AG04450 (cell line): ENCODE measurements at regions of chr10 and their contacts with region 1.

Region 1: GRCh38 chr10:124911124-124912067 is 30.5 kb upstream of the ZRANB1 start:
- DNase-seq: no peak
- H3K4me3 ChIP-seq: no peak overlapping the region
- H3K27ac ChIP-seq: peak overlapping the region; percentile 58
- H3K27me3 ChIP-seq: no peaks in the 10 kb centered on the region
- CTCF ChIP-seq: no peak; the same call in 1 of the 2 replicates

Region 2: DNA sequence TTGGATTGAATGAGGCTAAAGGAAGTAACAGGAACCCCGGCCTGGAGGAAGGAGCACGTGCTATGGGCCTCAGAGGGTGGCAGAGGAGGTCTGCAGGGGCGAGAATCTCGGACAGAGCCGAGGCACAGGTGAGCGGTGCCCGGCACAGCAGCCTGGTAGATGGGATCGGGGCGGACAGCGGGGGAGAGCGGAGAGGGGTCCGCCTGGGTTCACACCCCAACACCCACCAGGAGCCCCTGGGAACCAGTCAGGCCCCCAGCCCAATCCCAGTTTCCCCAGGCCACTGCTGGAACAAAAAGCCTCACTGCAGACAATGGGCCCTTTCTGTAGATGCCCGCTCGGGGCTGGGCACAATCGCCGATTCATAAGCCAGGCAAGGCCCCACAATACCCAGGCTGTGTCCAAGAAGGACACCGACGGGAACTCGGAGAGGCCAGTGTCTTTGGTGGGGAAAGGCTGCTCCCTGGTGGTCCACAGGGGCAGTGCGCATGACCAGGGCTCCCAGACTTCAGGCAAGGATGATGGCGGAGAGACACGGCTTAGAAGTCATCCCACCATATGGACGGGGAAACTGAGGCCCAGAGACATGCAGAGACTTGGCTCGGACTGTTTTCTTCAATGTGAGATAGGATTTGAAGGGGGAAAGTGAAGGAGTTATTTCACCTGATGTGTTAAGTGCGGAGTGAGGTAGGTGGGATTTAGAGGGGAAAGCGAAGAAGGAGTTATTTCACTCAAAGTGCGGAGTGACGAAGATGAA is 1352.2 kb before region 1 on chr10:
- CTCF ChIA-PET with region 1: no interaction called
- POLR2A ChIA-PET with region 1: no interaction called
- DNase-seq: no peak
- H3K4me3 ChIP-seq: no peak overlapping the region
- H3K27ac ChIP-seq: no peak overlapping the region
- H3K27me3 ChIP-seq: no peaks in the 10 kb centered on the region
- CTCF ChIP-seq: peak; percentile 88

Region 3: DNA sequence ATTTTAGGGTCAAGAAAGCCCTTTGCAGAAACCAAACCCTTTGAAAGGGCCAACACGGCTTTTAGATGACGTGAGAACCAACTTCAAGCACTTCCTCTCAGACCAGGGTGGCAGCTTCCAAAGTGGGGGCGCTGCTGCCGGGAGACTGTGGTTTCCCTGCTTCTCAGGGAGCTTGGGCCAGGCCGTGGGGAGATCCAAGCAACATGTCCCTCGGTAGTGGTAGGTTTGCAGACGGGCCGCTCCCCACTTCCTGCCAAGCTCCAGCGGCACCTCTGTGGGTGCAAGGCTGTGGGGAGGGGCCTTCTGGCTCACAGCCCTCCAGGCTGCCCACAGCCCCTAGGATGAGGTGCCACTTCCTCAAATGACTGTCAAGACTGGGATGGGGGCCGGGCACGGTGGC is 299.7 kb before region 1 on chr10:
- CTCF ChIA-PET with region 1: interaction called, 12 read pairs
- POLR2A ChIA-PET with region 1: no interaction called
- DNase-seq: no peak
- H3K4me3 ChIP-seq: no peak overlapping the region
- H3K27ac ChIP-seq: no peak overlapping the region
- H3K27me3 ChIP-seq: no peaks in the 10 kb centered on the region
- CTCF ChIP-seq: no peak

Region 4: DNA sequence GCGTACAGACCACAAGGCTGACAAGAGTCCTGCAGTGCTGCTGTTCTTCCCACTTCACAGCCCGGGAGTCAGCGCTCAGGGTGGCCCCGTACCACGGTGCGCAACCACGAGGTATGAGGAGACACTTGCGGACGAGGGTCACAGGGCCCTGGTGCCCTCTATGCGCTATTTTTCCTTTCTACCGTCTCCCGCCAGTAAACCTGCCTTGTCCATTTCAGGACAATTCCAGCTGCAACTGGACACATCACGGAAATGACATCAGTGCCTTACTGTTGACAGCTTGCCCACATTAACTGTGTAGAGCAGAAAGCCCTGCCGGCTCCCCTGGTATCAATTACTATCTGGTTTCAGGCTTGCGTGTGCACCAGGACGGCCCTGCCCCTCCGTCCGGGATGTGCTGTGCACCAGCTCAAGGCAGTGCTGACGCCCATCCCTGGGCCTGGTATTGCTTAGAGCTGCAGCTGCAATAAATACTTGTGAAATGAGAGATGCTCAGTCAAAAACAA is 95.6 kb after region 1 on chr10:
- CTCF ChIA-PET with region 1: no interaction called
- POLR2A ChIA-PET with region 1: interaction called, 11 read pairs
- DNase-seq: no peak
- H3K4me3 ChIP-seq: no peak overlapping the region
- H3K27ac ChIP-seq: no peak overlapping the region
- H3K27me3 ChIP-seq: no peaks in the 10 kb centered on the region
- CTCF ChIP-seq: no peak